ENCODE measurements at regions of chr1 and their contacts with region 1.

Region 1: DNA sequence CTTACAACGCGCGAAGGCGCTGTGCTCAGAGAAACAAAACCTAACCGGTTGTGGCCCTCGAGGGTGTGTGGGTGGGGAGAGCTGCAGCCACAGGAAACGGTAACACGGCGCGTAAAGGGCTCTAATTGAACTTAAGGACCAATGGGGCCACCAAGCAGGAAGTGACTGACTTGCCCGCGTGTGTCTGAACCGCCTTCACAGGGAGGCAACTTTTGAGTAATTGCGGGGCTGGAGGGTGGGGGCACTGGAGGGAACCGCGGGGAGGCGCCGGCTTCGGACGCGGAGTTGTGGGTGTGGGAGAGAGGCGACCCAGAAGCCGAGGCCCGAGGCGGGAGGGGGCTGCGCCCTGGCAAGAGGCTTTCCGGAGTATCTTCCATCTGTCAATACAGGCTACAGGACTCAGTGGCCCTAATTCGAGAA is 577 bp upstream of the PNRC2 start:
- DNase-seq: peak; percentile 60 to 96 (median 92)
- ATAC-seq: peak; percentile 89
- H3K4me3 ChIP-seq: peak overlapping the region; percentile 72
- H3K4me3 Mint-ChIP-seq: peak overlapping the region; percentile 93 to 100 (median 99)
- H3K27ac ChIP-seq: peak overlapping the region; percentile 95
- H3K27ac Mint-ChIP-seq: peak overlapping the region; percentile 98 to 100 (median 100)
- H3K4me1 ChIP-seq: peaks cover 23 to 25% of the 10 kb centered on the region in 2 donors
- H3K4me1 Mint-ChIP-seq: peaks cover 31 to 83% (median 57%) of the 10 kb centered on the region in 7 donors
- H3K27me3 ChIP-seq: no peaks in the 10 kb centered on the region
- H3K27me3 Mint-ChIP-seq: no peaks in the 10 kb centered on the region

Region 2: DNA sequence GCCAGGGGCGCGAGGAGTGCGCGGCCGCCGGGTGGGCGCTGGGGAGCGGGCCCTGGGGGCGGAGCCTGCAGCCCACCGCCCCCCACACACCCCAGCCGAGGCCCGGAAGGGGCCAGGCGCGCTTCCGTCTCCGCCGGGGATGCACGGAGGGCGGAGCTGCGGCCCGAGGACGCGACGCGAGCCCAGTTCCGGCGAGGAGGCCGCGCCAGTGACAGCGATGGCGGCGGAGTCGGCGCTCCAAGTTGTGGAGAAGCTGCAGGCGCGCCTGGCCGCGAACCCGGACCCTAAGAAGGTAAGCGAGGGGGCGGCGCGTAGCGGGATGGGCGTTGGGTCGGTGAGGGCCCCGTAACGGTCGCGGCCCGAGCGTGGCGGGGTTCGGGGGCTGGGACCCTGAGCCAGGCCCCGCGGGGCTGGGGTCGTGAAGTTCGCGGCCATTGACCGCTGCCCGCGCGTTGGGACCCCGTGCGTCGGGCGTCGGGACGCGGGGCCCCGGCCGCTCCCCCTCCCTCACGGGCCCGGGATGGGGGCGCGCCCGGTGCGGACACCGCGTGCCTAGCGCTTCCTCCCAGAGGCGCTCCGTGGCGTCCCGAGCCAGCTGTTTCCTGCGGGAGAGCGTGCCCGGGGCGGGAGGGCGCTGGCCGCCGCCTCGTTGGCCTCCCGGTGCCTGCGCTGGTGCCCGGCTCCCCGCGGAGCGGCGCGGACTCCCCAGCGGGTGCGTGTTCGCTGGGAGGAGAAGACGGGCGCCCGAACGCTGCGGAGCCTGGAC is 215.6 kb before region 1 on chr1 and contains the start of gene ELOA:
- CTCF ChIA-PET with region 1: no interaction called
- POLR2A ChIA-PET with region 1: interaction called, 3 read pairs
- intact Hi-C with region 1: loop called in 1 of 2 experiments (anchors 1 kb)
- DNase-seq: peak; percentile 68 to 84 (median 77)
- ATAC-seq: peak; percentile 98
- H3K4me3 ChIP-seq: peak within 1 kb of the TSS; percentile 87
- H3K4me3 Mint-ChIP-seq: peak within 1 kb of the TSS; percentile 90 to 93 (median 92)
- H3K27ac ChIP-seq: peak within 1 kb of the TSS; percentile 96
- H3K27ac Mint-ChIP-seq: peak within 1 kb of the TSS; percentile 80 to 95 (median 91)
- H3K4me1 ChIP-seq: peaks cover 22 to 39% of the 10 kb centered on the region in 2 donors
- H3K4me1 Mint-ChIP-seq: peaks cover 35 to 52% (median 49%) of the 10 kb centered on the region in 7 donors
- H3K27me3 ChIP-seq: no peaks in the 10 kb centered on the region
- H3K27me3 Mint-ChIP-seq: no peaks in the 10 kb centered on the region
- total RNA-seq, gene ELOA: 28.0 to 36.1 (median 30.4) TPM

Region 3: GRCh38 chr1:23790696-23791515 is 168.1 kb before region 1 on chr1 and contains the start of gene LYPLA2:
- CTCF ChIA-PET with region 1: no interaction called
- POLR2A ChIA-PET with region 1: no interaction called
- intact Hi-C with region 1: loop called in 1 of 2 experiments (anchors 1 kb)
- DNase-seq: peak; percentile 65 to 90 (median 79)
- ATAC-seq: peak; percentile 91
- H3K4me3 ChIP-seq: peak within 1 kb of the TSS; percentile 96
- H3K4me3 Mint-ChIP-seq: peak within 1 kb of the TSS; percentile 91 to 98 (median 97)
- H3K27ac ChIP-seq: peak within 1 kb of the TSS; percentile 88
- H3K27ac Mint-ChIP-seq: peak within 1 kb of the TSS; percentile 88 to 99 (median 97)
- H3K4me1 ChIP-seq: peaks cover 6 to 18% of the 10 kb centered on the region in 2 donors
- H3K4me1 Mint-ChIP-seq: peaks cover 9 to 28% (median 23%) of the 10 kb centered on the region in 7 donors
- H3K27me3 ChIP-seq: no peaks in the 10 kb centered on the region
- H3K27me3 Mint-ChIP-seq: no peaks in the 10 kb centered on the region
- total RNA-seq, gene LYPLA2: 40.7 to 83.8 (median 48.2) TPM

Region 4: DNA sequence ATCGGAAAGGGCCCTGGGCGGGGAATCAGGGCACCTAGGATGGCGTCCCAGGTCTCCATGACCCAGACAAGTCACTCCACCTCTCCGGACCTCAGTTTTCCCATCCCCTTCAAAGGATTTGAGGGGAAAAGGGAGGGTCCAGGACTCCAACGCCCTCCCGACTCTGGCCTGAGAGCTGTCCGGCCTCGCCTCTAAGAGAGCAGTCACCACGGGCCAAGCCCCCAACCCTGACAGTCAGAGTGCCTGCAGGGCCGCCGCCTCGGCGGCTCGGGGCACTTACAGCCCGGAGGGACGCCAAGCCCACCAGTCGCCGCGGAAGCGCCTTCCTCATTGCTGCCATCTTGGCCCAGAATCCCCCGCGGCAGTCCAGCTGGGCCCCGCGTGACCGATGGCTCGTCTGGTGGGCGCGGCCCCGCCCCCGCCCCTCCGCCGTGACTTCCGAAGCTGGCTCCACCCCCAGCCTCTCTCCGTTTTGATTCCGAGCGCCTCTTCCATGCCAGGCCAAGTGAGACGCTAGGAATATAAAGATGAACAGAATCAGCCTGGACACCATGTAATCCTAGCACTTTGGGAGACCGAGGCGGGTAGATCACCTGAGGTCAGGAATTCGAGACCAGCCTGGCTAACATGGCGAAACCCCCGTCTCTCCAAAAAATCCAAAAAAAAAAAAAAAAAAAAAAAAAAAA is 133.8 kb before region 1 on chr1 and contains the start of gene HMGCL:
- CTCF ChIA-PET with region 1: no interaction called
- POLR2A ChIA-PET with region 1: interaction called, 5 read pairs
- intact Hi-C with region 1: loop called in 1 of 2 experiments (anchors 1 kb)
- DNase-seq: peak; percentile 64 to 89 (median 81)
- ATAC-seq: peak; percentile 99
- H3K4me3 ChIP-seq: peak within 1 kb of the TSS; percentile 95
- H3K4me3 Mint-ChIP-seq: peak within 1 kb of the TSS; percentile 86 to 96 (median 94)
- H3K27ac ChIP-seq: peak within 1 kb of the TSS; percentile 95
- H3K27ac Mint-ChIP-seq: peak within 1 kb of the TSS; percentile 76 to 98 (median 96)
- H3K4me1 ChIP-seq: peaks cover 6% of the 10 kb centered on the region in 2 donors
- H3K4me1 Mint-ChIP-seq: peaks cover 11 to 33% (median 20%) of the 10 kb centered on the region in 7 donors
- H3K27me3 ChIP-seq: no peaks in the 10 kb centered on the region
- H3K27me3 Mint-ChIP-seq: peaks cover 0 to 5% (median 0%) of the 10 kb centered on the region in 5 donors
- total RNA-seq, gene HMGCL: 16.2 to 38.9 (median 27.3) TPM

Region 5: DNA sequence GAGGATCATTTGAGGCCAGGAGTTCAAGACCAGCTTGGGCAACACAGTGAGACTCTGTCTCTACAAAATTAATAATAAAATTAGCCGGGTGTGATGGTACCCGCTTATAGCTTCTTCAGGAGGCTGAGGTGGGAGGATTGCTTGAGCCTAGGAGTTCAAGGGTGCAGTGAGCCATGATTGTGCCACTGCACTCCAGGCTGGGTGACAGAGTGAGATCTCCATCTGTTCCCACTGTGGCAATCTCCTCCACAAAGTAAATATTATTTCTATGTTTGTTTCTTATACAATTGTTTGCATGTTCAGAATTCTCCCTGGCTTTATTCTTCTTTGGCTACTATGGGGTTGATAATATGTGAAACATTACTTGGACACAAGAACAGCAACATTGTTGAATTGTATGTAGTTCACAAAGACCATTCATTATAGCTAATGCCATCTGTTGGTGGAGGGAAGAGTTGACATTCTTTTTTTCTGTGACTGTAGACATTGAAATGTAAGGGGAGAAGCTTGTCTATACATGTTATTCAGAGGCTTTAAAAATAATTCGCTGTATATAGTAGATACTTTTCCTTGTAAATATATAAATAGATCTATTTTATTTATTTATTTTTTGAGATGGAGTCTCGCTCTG is 68.9 kb after region 1 on chr1:
- CTCF ChIA-PET with region 1: interaction called, 4 read pairs
- POLR2A ChIA-PET with region 1: no interaction called
- intact Hi-C with region 1: loop called in 1 of 2 experiments (anchors 1 kb)
- DNase-seq: peak in 6 of 9 donors; percentile 4 to 45 (median 26)
- ATAC-seq: no peak
- H3K4me3 ChIP-seq: no peak overlapping the region
- H3K4me3 Mint-ChIP-seq: no peak overlapping the region
- H3K27ac ChIP-seq: no peak overlapping the region
- H3K27ac Mint-ChIP-seq: no peak overlapping the region
- H3K4me1 ChIP-seq: no peaks in the 10 kb centered on the region
- H3K4me1 Mint-ChIP-seq: peaks cover 0 to 8% (median 2%) of the 10 kb centered on the region in 7 donors
- H3K27me3 ChIP-seq: no peaks in the 10 kb centered on the region
- H3K27me3 Mint-ChIP-seq: peaks cover 0 to 2% (median 0%) of the 10 kb centered on the region in 5 donors

Region 6: GRCh38 chr1:24141311-24141997 is 182.4 kb after region 1 on chr1:
- CTCF ChIA-PET with region 1: no interaction called
- POLR2A ChIA-PET with region 1: no interaction called
- intact Hi-C with region 1: no loop called
- DNase-seq: no peak
- ATAC-seq: no peak
- H3K4me3 ChIP-seq: no peak overlapping the region
- H3K4me3 Mint-ChIP-seq: no peak overlapping the region
- H3K27ac ChIP-seq: no peak overlapping the region
- H3K27ac Mint-ChIP-seq: peak overlapping the region in 1 of 9 donors; percentile 36
- H3K4me1 ChIP-seq: no peaks in the 10 kb centered on the region
- H3K4me1 Mint-ChIP-seq: peaks cover 0 to 5% (median 2%) of the 10 kb centered on the region in 7 donors
- H3K27me3 ChIP-seq: no peaks in the 10 kb centered on the region
- H3K27me3 Mint-ChIP-seq: peaks cover 0 to 20% (median 5%) of the 10 kb centered on the region in 5 donors

Region 7: GRCh38 chr1:24415334-24415909 is 456.4 kb after region 1 on chr1 and contains the start of gene NIPAL3:
- CTCF ChIA-PET with region 1: interaction called, 3 read pairs
- POLR2A ChIA-PET with region 1: no interaction called
- intact Hi-C with region 1: loop called in 1 of 2 experiments (anchors 10 kb)
- DNase-seq: peak; percentile 81 to 99 (median 97)
- ATAC-seq: peak; percentile 98
- H3K4me3 ChIP-seq: peak within 1 kb of the TSS; percentile 76
- H3K4me3 Mint-ChIP-seq: peak within 1 kb of the TSS; percentile 95 to 100 (median 98)
- H3K27ac ChIP-seq: peak within 1 kb of the TSS; percentile 74
- H3K27ac Mint-ChIP-seq: peak within 1 kb of the TSS; percentile 75 to 99 (median 90)
- H3K4me1 ChIP-seq: peaks cover 23 to 44% of the 10 kb centered on the region in 2 donors
- H3K4me1 Mint-ChIP-seq: peaks cover 51 to 91% (median 75%) of the 10 kb centered on the region in 7 donors
- H3K27me3 ChIP-seq: no peaks in the 10 kb centered on the region
- H3K27me3 Mint-ChIP-seq: no peaks in the 10 kb centered on the region
- total RNA-seq, gene NIPAL3: 35.5 to 65.0 (median 54.5) TPM

Region 8: DNA sequence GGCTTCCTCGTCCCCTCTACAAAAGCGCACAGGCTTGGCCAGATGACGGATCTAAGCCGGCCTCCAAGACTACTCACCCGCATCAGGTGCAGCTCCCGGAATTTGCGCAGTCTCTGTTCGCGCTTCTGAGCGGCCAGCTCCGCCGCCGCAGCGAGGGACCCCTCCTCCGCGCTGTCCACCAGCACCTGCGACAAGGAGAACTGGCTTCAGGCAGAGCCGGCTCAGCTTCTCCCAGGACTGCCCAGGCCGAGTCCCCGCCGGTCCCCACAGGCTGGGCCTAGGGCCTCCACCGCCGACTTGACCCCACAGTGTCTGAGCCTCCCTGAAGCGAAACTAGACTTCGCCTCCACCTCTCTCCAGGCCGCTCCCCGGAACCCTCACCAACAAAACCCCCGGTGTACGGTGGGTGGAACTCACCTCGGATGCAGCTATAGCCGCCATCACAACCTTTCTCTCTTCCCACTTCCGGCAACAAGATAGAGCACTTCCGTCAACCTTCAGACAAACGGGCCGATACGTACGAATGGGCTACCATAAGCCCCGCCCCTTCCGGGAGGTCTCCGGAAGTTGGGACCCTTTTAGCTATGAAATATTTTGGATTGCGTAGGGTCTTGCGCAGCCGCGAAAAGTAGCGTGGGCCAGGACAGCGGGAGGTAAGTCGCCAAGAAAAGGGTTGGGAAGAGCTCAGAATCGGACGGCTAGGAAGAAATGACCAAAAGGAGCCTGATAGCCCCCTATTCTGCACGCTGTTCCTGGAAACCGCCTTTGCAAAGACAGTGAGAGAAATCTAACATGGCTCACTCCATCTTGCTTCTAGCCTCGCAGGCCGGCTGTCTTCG is 1273.2 kb after region 1 on chr1 and contains the start of gene SYF2:
- CTCF ChIA-PET with region 1: no interaction called
- POLR2A ChIA-PET with region 1: interaction called, 12 read pairs
- intact Hi-C with region 1: loop called in 1 of 2 experiments (anchors 10 kb)
- DNase-seq: peak; percentile 71 to 93 (median 90)
- ATAC-seq: peak; percentile 94
- H3K4me3 ChIP-seq: peak within 1 kb of the TSS; percentile 92
- H3K4me3 Mint-ChIP-seq: no peak within 1 kb of the TSS
- H3K27ac ChIP-seq: peak within 1 kb of the TSS; percentile 91
- H3K27ac Mint-ChIP-seq: no peak within 1 kb of the TSS
- H3K4me1 ChIP-seq: peaks cover 14 to 15% of the 10 kb centered on the region in 2 donors
- H3K4me1 Mint-ChIP-seq: peaks cover 18 to 33% (median 30%) of the 10 kb centered on the region in 7 donors
- H3K27me3 ChIP-seq: no peaks in the 10 kb centered on the region
- H3K27me3 Mint-ChIP-seq: no peaks in the 10 kb centered on the region
- total RNA-seq, gene SYF2: 44.4 to 83.3 (median 59.4) TPM

Measured in naive thymus-derived CD4-positive, alpha-beta T cell (primary cell).